Naive thymus-derived CD8-positive, alpha-beta T cell (primary cell): ENCODE measurements at regions of chr15 and their contacts with region 1.

Region 1: GRCh38 chr15:65304389-65305144 is at the start of gene RNU5B-1:
- DNase-seq: peak; percentile 44 to 99 (median 76)
- ATAC-seq: peak; percentile 78 to 79
- H3K4me3 Mint-ChIP-seq: peak within 1 kb of the TSS; percentile 95 to 98 (median 96)
- H3K27ac Mint-ChIP-seq: peak within 1 kb of the TSS; percentile 97 to 100 (median 98)
- H3K4me1 Mint-ChIP-seq: peaks cover 13 to 41% (median 25%) of the 10 kb centered on the region in 4 donors
- H3K27me3 Mint-ChIP-seq: no peaks in the 10 kb centered on the region
- polyA plus RNA-seq, gene RNU5B-1: not detected

Region 2: GRCh38 chr15:64997745-64998375 is 306.7 kb before region 1 on chr15:
- POLR2A ChIA-PET with region 1: no interaction called
- DNase-seq: no peak
- ATAC-seq: no peak
- H3K4me3 Mint-ChIP-seq: no peak overlapping the region
- H3K27ac Mint-ChIP-seq: no peak overlapping the region
- H3K4me1 Mint-ChIP-seq: peaks cover 0 to 2% (median 0%) of the 10 kb centered on the region in 4 donors
- H3K27me3 Mint-ChIP-seq: no peaks in the 10 kb centered on the region

Region 3: DNA sequence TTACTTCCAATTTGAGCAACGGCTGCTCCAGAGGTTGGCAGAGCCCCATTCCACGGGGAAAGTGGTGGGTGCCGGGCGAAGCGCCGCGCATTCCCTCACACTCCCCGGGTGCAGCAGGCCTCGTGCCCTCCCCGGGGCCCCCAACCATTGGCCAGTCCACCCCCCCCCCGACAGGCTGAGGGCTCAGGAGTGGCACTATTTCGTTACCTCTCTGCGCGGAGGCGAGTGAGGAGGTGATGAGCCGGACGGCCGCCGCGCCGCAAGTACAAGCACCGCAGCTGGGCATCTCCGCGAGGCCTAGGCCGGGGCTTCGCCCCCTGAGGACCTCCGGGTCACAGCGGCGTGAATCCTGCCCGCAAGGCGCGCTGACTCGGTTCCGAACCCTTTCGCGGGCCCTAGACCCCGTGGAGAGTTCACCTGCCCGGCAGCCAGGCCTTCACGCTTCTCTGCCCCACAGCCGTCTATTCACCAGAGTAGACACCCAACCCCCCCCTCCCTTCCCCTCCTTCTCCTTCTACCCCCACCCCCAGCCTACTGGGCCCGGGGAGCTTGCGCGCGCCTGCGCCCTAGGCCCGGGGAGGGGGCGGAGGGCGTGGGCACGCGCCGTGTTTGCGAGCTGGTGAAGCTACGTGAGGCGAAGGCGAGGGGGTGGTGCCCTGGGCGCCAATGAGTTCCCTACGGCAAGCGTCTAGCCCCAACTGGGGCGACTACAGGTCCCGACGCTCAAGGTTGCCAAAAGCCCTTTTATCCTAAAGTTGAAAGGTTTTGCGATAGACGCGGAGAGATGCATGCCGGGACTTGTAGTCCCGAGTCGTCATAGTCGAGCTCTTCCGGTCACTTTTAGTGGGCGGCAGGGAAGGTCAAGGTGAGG is 119.5 kb before region 1 on chr15 and contains the start of gene CLPX:
- POLR2A ChIA-PET with region 1: interaction called, 29 read pairs
- DNase-seq: peak; percentile 79 to 96 (median 92)
- ATAC-seq: peak; percentile 96 to 97
- H3K4me3 Mint-ChIP-seq: peak within 1 kb of the TSS; percentile 89 to 97 (median 94)
- H3K27ac Mint-ChIP-seq: peak within 1 kb of the TSS; percentile 92 to 98 (median 97)
- H3K4me1 Mint-ChIP-seq: peaks cover 10 to 37% (median 31%) of the 10 kb centered on the region in 4 donors
- H3K27me3 Mint-ChIP-seq: no peaks in the 10 kb centered on the region
- polyA plus RNA-seq, gene CLPX: 30.0 to 33.8 (median 31.3) TPM

Region 4: GRCh38 chr15:65286704-65287519 is 17.7 kb before region 1 on chr15 and contains the start of gene PARP16:
- POLR2A ChIA-PET with region 1: interaction called, 93 read pairs
- DNase-seq: peak; percentile 83 to 95 (median 89)
- ATAC-seq: peak; percentile 95
- H3K4me3 Mint-ChIP-seq: peak within 1 kb of the TSS; percentile 84 to 93 (median 89)
- H3K27ac Mint-ChIP-seq: peak within 1 kb of the TSS; percentile 83 to 96 (median 93)
- H3K4me1 Mint-ChIP-seq: peaks cover 20 to 51% (median 47%) of the 10 kb centered on the region in 4 donors
- H3K27me3 Mint-ChIP-seq: no peaks in the 10 kb centered on the region
- polyA plus RNA-seq, gene PARP16: 27.6 to 39.3 (median 30.0) TPM

Region 5: GRCh38 chr15:65318870-65319356 is 14.3 kb after region 1 on chr15:
- POLR2A ChIA-PET with region 1: interaction called, 11 read pairs
- DNase-seq: peak; percentile 49 to 84 (median 74)
- ATAC-seq: peak; percentile 98 to 100
- H3K4me3 Mint-ChIP-seq: no peak overlapping the region
- H3K27ac Mint-ChIP-seq: peak overlapping the region in 3 of 10 donors; percentile 3 to 19 (median 15)
- H3K4me1 Mint-ChIP-seq: peaks cover 0 to 4% (median 0%) of the 10 kb centered on the region in 4 donors
- H3K27me3 Mint-ChIP-seq: peaks cover 0 to 11% (median 4%) of the 10 kb centered on the region in 5 donors